Right cardiac atrium (tissue), 5 donors: ENCODE measurements at regions of chr9 and their contacts with region 1.

Region 1: GRCh38 chr9:122810306-122810946 is 10.5 kb downstream of the OR1K1 start:
- DNase-seq: peak; percentile 63 to 81 (median 80)
- ATAC-seq: peak; percentile 89 to 91
- H3K4me3 ChIP-seq: no peak overlapping the region
- H3K27ac ChIP-seq: no peak overlapping the region
- H3K4me1 ChIP-seq: no peaks in the 10 kb centered on the region
- H3K27me3 ChIP-seq: no peaks in the 10 kb centered on the region

Region 2: GRCh38 chr9:122092611-122093506 is 717.6 kb before region 1 on chr9 and contains the start of gene TTLL11:
- intact Hi-C with region 1: loop called in 1 of 4 experiments (anchors 10 kb)
- DNase-seq: peak; percentile 98 to 99 (median 99)
- ATAC-seq: peak; percentile 96 to 97
- H3K4me3 ChIP-seq: peak within 1 kb of the TSS; percentile 70
- H3K27ac ChIP-seq: peak within 1 kb of the TSS; percentile 59
- H3K4me1 ChIP-seq: peaks cover 17% of the 10 kb centered on the region
- H3K27me3 ChIP-seq: no peaks in the 10 kb centered on the region
- total RNA-seq, gene TTLL11: 3.5 to 8.6 (median 5.8) TPM

Region 3: DNA sequence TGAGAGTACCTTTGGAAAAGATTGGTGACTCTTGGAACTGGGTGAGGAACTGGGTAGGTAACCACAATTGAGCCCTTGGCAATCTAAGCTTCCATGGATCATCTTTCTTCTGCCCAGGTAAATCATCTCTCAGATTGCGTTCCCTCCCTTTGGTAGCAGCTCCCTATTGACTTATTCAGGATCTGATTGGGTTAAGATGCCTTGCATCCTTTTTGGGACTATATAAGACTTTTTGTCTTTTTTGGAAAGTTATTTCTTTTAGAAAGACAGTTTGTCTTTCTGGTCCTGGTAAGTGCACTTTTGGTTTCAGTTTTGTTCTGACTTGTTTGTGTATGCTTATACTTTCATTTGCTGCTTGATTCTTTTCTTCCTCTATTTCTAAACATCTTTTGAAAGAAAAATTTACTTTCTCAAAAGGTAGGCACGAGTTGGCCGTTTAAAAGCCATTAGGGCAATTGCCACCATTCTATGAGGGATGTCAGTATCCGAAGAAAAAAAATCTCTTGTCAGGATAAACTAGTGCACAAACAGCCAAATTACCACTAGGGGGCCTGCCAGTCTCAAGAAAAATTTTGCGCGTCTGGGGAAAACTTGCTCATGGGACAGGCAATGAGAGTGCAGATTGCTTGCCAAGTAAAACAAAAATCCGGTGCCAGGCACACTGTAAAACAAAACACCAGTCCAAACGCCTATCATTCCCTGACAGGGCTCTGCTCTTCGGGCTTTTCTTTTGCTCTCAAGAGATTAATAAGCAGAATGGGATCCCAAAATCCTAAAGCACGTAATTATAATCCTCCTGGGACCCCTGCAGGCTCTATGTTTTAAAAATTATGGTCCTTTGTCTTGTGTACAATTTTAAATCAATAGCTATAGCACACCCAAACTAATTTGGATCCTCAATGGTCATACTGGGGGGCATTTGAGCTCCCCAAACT is 345.5 kb before region 1 on chr9:
- intact Hi-C with region 1: loop called (anchors 2 to 10 kb)
- DNase-seq: peak; percentile 52 to 79 (median 73)
- ATAC-seq: peak; percentile 91 to 94
- H3K4me3 ChIP-seq: peak overlapping the region; percentile 44
- H3K27ac ChIP-seq: no peak overlapping the region
- H3K4me1 ChIP-seq: no peaks in the 10 kb centered on the region
- H3K27me3 ChIP-seq: no peaks in the 10 kb centered on the region

Region 4: DNA sequence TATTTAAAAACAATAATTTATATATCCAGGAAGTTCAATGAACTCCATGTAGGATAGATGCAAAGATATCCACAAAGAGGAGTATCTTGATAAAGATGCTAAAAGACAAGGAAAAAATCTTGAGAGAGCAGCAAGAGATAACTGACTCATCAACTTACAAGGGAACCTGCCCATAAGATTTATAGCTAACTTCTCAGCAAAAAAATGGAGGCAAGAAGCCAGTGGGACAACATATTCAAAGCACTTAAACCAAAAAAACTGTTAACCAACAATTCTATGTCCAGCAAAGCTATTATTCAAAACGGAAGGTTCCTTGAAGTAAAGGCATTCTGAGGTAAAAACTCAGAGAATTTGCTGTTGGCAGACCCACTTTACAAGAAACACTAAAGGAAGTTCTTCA is 150.7 kb after region 1 on chr9:
- intact Hi-C with region 1: no loop called
- DNase-seq: no peak
- ATAC-seq: no peak
- H3K4me3 ChIP-seq: no peak overlapping the region
- H3K27ac ChIP-seq: no peak overlapping the region
- H3K4me1 ChIP-seq: no peaks in the 10 kb centered on the region
- H3K27me3 ChIP-seq: no peaks in the 10 kb centered on the region